B cell (primary cell): ENCODE measurements at regions of chr5 and their contacts with region 1.

Region 1: DNA sequence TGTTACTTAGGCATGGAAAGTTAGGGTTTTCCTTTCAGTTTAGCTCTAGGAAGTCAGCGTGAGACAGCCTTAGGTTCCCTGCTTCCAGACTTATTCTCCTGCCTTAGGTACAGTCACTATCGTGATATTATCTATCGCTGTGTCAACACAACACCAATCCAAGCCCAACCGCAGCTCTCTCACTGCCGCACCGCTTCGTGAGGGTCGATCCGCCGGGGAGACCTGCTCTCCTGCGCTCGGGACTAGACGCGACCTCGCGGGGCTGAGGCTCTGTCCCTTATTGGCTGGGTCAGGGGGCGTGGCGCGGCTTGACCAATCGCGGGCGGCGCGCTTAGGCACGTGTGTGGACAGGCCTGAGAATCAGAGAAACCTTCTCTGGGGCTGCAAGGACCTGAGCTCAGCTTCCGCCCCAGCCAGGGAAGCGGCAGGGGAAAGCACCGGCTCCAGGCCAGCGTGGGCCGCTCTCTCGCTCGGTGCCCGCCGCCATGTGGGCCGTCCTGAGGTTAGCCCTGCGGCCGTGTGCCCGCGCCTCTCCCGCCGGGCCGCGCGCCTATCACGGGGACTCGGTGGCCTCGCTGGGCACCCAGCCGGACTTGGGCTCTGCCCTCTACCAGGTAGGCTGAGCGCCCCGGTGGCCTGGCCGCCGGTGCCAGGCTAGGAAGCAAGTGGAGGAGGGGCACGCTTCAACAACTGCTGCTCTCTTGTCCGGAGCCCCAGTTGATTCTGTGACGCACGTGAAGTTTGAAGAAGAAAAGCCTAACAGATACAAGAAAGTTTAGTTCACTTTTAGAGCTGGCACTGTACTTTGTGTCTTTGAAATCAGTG is at the start of gene MCCC2:
- DNase-seq: peak; percentile 97
- ATAC-seq: peak; percentile 97
- H3K4me3 ChIP-seq: peak within 1 kb of the TSS; percentile 72 to 95 (median 92)
- H3K4me3 Mint-ChIP-seq: peak within 1 kb of the TSS; percentile 97
- H3K27ac ChIP-seq: peak within 1 kb of the TSS; percentile 83 to 97
- H3K27ac Mint-ChIP-seq: peak within 1 kb of the TSS; percentile 99
- H3K4me1 ChIP-seq: peaks cover 27 to 32% of the 10 kb centered on the region in 2 donors
- H3K4me1 Mint-ChIP-seq: peaks cover 39% of the 10 kb centered on the region
- H3K27me3 ChIP-seq: no peaks in the 10 kb centered on the region
- H3K27me3 Mint-ChIP-seq: no peaks in the 10 kb centered on the region
- CTCF ChIP-seq: no peak
- total RNA-seq, gene MCCC2: 47.2 and 49.7 TPM in 2 replicates

Region 2: GRCh38 chr5:71455427-71456361 is 131.5 kb before region 1 on chr5 and contains the start of gene BDP1:
- CTCF ChIA-PET with region 1: no interaction called
- POLR2A ChIA-PET with region 1: interaction called, 9 read pairs
- intact Hi-C with region 1: loop called (anchors 1 kb)
- DNase-seq: peak; percentile 97
- ATAC-seq: peak; percentile 86
- H3K4me3 ChIP-seq: peak within 1 kb of the TSS; percentile 71 to 99 (median 90)
- H3K4me3 Mint-ChIP-seq: peak within 1 kb of the TSS; percentile 94
- H3K27ac ChIP-seq: peak within 1 kb of the TSS; percentile 87 to 92
- H3K27ac Mint-ChIP-seq: peak within 1 kb of the TSS; percentile 97
- H3K4me1 ChIP-seq: peaks cover 17% of the 10 kb centered on the region in 2 donors
- H3K4me1 Mint-ChIP-seq: peaks cover 24% of the 10 kb centered on the region
- H3K27me3 ChIP-seq: peaks cover 0 to 7% (median 5%) of the 10 kb centered on the region in 4 experiments
- H3K27me3 Mint-ChIP-seq: peaks cover 7% of the 10 kb centered on the region
- CTCF ChIP-seq: peak; percentile 68
- total RNA-seq, gene BDP1: 59.4 and 63.9 TPM in 2 replicates

Region 3: GRCh38 chr5:71601222-71602041 is 14.3 kb after region 1 on chr5:
- CTCF ChIA-PET with region 1: interaction called, 10 read pairs
- POLR2A ChIA-PET with region 1: no interaction called
- intact Hi-C with region 1: no loop called
- DNase-seq: peak; percentile 50
- ATAC-seq: peak; percentile 70
- H3K4me3 ChIP-seq: no peak overlapping the region
- H3K4me3 Mint-ChIP-seq: no peak overlapping the region
- H3K27ac ChIP-seq: no peak overlapping the region
- H3K27ac Mint-ChIP-seq: no peak overlapping the region
- H3K4me1 ChIP-seq: no peaks in the 10 kb centered on the region
- H3K4me1 Mint-ChIP-seq: peaks cover 1% of the 10 kb centered on the region
- H3K27me3 ChIP-seq: no peaks in the 10 kb centered on the region
- H3K27me3 Mint-ChIP-seq: no peaks in the 10 kb centered on the region
- CTCF ChIP-seq: peak; percentile 81